ENCODE measurements at regions of chr4 and their contacts with region 1.

Region 1: DNA sequence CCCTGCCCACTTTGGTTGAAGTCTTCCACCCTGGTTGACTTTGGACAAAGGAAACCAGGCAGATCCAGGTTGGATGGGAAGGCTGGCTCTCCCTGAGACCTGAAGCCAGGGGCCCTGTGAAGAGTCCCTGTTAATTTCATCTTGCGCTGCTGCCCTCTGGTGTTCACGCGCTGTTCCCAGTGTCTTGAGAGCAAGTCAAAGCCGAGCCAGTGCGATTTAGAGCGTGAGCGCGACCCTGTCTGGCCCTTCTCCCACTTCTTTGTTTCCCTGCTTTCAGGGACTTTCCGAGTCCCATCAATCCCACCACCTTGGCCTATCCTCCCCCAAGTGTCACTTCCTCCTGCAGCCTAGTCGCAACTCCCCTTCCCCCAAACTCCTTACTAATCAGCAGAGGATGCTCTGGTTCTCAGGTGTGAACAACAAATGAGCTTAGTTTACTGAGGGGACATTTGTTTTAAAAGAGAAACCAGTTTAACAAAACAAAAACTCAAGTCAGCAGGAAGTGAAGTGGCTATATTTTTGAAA is 25.8 kb upstream of the CHRNA9 start:
- DNase-seq: peak; percentile 82 to 96 (median 91)
- ATAC-seq: peak; percentile 62
- H3K4me3 ChIP-seq: peak overlapping the region; percentile 36
- H3K4me3 Mint-ChIP-seq: peak overlapping the region; percentile 85
- H3K27ac ChIP-seq: peak overlapping the region; percentile 86 to 93
- H3K27ac Mint-ChIP-seq: peak overlapping the region; percentile 99
- H3K4me1 ChIP-seq: peaks cover 81% of the 10 kb centered on the region
- H3K4me1 Mint-ChIP-seq: peaks cover 87% of the 10 kb centered on the region
- H3K27me3 ChIP-seq: no peaks in the 10 kb centered on the region
- H3K27me3 Mint-ChIP-seq: no peaks in the 10 kb centered on the region
- CTCF ChIP-seq: peak; percentile 93

Region 2: DNA sequence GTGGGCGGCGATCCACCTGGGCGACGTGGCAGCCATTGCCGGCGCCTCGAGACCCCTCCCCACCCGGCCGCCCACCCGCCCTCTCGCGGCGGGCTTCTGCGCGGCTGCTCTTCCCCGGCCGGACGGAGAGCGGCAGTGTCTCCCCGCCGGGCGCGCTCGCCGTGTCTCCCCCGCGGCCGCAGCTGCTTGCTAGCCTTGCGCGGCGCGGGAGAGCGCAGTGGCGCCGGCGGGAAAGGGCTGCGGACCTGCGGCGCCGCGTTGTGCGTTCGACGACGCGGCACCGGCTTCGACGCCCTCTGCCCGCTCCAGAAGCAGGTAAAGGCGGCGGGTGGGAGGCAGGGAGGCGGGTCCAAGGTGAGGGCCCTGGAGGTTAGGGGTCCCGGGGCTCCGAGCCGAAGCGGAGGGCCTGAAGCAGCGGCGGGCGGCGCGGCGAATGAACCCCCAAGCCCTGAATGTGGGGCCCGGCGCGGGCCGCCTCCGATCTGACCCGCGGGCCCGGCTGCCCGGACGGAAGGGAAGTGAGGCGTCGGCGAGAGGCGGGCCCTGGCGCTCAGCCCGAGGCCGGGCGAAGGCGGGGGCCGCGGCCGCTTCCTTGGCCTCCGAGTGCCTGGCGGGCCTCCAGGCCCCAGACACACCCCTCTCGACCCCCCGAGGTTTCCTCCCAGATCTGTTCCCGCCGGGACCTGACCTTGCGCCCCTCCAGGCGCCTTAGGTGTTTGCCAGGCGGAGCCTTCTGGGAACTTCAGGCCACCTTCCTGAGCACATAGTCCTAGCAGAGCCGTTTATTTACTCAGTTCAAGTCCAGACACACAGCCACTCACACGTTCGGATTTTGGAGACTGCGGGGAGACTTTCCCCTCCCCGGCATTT is 252.4 kb before region 1 on chr4 and contains the start of gene N4BP2:
- CTCF ChIA-PET with region 1: interaction called, 6 read pairs
- POLR2A ChIA-PET with region 1: interaction called, 10 read pairs
- intact Hi-C with region 1: loop called in 1 of 2 experiments (anchors 5 kb)
- DNase-seq: peak; percentile 54 to 91 (median 71)
- ATAC-seq: peak; percentile 66
- H3K4me3 ChIP-seq: peak within 1 kb of the TSS; percentile 96
- H3K4me3 Mint-ChIP-seq: peak within 1 kb of the TSS; percentile 95
- H3K27ac ChIP-seq: peak within 1 kb of the TSS; percentile 83 to 89
- H3K27ac Mint-ChIP-seq: peak within 1 kb of the TSS; percentile 94
- H3K4me1 ChIP-seq: peaks cover 29% of the 10 kb centered on the region
- H3K4me1 Mint-ChIP-seq: peaks cover 40% of the 10 kb centered on the region
- H3K27me3 ChIP-seq: no peaks in the 10 kb centered on the region
- H3K27me3 Mint-ChIP-seq: no peaks in the 10 kb centered on the region
- CTCF ChIP-seq: peak; percentile 77
- total RNA-seq, gene N4BP2: 21.7 to 25.2 TPM

Region 3: GRCh38 chr4:40199999-40200874 is 109.1 kb before region 1 on chr4:
- CTCF ChIA-PET with region 1: interaction called, 7 read pairs
- POLR2A ChIA-PET with region 1: interaction called, 98 read pairs
- intact Hi-C with region 1: loop called (anchors 1 to 5 kb)
- DNase-seq: peak in 10 of 14 experiments; percentile 31 to 90 (median 50)
- ATAC-seq: peak; percentile 18
- H3K4me3 ChIP-seq: peak overlapping the region; percentile 74
- H3K4me3 Mint-ChIP-seq: peak overlapping the region; percentile 100
- H3K27ac ChIP-seq: peak overlapping the region; percentile 93 to 99
- H3K27ac Mint-ChIP-seq: peak overlapping the region; percentile 99
- H3K4me1 ChIP-seq: peaks cover 33% of the 10 kb centered on the region
- H3K4me1 Mint-ChIP-seq: peaks cover 46% of the 10 kb centered on the region
- H3K27me3 ChIP-seq: no peaks in the 10 kb centered on the region
- H3K27me3 Mint-ChIP-seq: no peaks in the 10 kb centered on the region
- CTCF ChIP-seq: no peak

Region 4: GRCh38 chr4:40221744-40222143 is 87.6 kb before region 1 on chr4:
- CTCF ChIA-PET with region 1: interaction called, 4 read pairs
- POLR2A ChIA-PET with region 1: interaction called, 16 read pairs
- intact Hi-C with region 1: no loop called
- DNase-seq: no peak
- ATAC-seq: no peak
- H3K4me3 ChIP-seq: no peak overlapping the region
- H3K4me3 Mint-ChIP-seq: peak overlapping the region; percentile 32
- H3K27ac ChIP-seq: peak overlapping the region; percentile 3 to 37
- H3K27ac Mint-ChIP-seq: peak overlapping the region; percentile 93
- H3K4me1 ChIP-seq: peaks cover 76% of the 10 kb centered on the region
- H3K4me1 Mint-ChIP-seq: peaks cover 94% of the 10 kb centered on the region
- H3K27me3 ChIP-seq: no peaks in the 10 kb centered on the region
- H3K27me3 Mint-ChIP-seq: no peaks in the 10 kb centered on the region
- CTCF ChIP-seq: no peak

Region 5: GRCh38 chr4:40247350-40247749 is 62.0 kb before region 1 on chr4:
- CTCF ChIA-PET with region 1: interaction called, 7 read pairs
- POLR2A ChIA-PET with region 1: interaction called, 41 read pairs
- intact Hi-C with region 1: loop called (anchors 2 to 5 kb)
- DNase-seq: peak; percentile 51 to 87 (median 66)
- ATAC-seq: peak; percentile 81
- H3K4me3 ChIP-seq: no peak overlapping the region
- H3K4me3 Mint-ChIP-seq: peak overlapping the region; percentile 45
- H3K27ac ChIP-seq: peak overlapping the region; percentile 71 to 72
- H3K27ac Mint-ChIP-seq: peak overlapping the region; percentile 93
- H3K4me1 ChIP-seq: peaks cover 84% of the 10 kb centered on the region
- H3K4me1 Mint-ChIP-seq: peaks cover 88% of the 10 kb centered on the region
- H3K27me3 ChIP-seq: no peaks in the 10 kb centered on the region
- H3K27me3 Mint-ChIP-seq: no peaks in the 10 kb centered on the region
- CTCF ChIP-seq: no peak

Region 6: DNA sequence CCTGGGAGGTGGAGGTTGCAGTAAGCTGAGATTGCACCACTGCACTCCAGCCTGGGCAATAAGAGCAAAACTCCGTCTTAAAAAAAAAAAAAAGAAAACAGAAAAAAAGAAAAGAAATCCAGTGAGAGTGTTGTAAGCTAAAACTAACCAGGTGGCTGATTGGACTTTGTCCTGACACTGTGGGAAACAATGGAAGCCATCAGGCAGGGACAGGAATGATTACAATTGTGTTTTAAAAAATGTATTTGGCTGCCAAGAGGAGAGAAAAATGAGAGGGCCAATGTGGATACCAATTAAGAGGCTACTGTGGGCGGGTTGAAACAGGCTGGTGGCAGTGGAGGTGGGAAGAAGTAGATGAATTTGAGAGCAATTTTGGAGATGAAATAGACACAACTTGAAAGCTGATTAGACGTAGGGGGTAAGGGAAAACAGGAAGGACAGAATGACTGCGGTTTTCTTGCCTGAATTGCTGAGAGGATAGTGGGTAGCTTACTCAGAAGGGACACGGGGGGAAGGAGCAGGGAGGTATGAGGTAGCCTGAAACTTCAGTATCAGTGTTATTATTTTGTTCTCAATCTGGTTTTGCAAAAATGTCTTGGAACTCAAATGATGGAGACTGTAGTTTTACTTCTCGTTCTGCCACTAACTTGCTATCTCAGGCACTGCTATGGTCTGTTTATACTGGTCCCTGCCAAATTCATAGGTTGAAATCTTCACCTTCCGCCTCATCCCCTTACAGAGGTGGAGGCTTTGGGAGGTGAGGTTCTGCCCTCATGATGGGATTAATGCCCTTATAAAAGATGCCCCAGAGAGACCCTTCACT is 19.7 kb before region 1 on chr4:
- CTCF ChIA-PET with region 1: interaction called, 72 read pairs
- POLR2A ChIA-PET with region 1: interaction called, 43 read pairs
- intact Hi-C with region 1: loop called in 1 of 2 experiments (anchors 1 kb)
- DNase-seq: peak in 5 of 14 experiments; percentile 31 to 70 (median 59)
- ATAC-seq: peak; percentile 88
- H3K4me3 ChIP-seq: peak overlapping the region; percentile 8
- H3K4me3 Mint-ChIP-seq: peak overlapping the region; percentile 50
- H3K27ac ChIP-seq: peak overlapping the region; percentile 39 to 62
- H3K27ac Mint-ChIP-seq: peak overlapping the region; percentile 85
- H3K4me1 ChIP-seq: peaks cover 49% of the 10 kb centered on the region
- H3K4me1 Mint-ChIP-seq: peaks cover 74% of the 10 kb centered on the region
- H3K27me3 ChIP-seq: no peaks in the 10 kb centered on the region
- H3K27me3 Mint-ChIP-seq: no peaks in the 10 kb centered on the region
- CTCF ChIP-seq: no peak

Measured in CD4-positive, alpha-beta T cell (primary cell).